Activated CD4-positive, alpha-beta T cell treated with anti-CD3 and anti-CD28 coated beads for 36 hours (primary cell): ENCODE measurements at regions of chr2 and their contacts with region 1.

Region 1: GRCh38 chr2:70046534-70046933 is 40.7 kb upstream of the PCBP1 start:
- DNase-seq: no peak
- ATAC-seq: no peak
- H3K4me3 Mint-ChIP-seq: no peak overlapping the region
- H3K27ac Mint-ChIP-seq: no peak overlapping the region
- H3K4me1 Mint-ChIP-seq: peaks cover 20% of the 10 kb centered on the region
- H3K27me3 Mint-ChIP-seq: no peaks in the 10 kb centered on the region

Region 2: DNA sequence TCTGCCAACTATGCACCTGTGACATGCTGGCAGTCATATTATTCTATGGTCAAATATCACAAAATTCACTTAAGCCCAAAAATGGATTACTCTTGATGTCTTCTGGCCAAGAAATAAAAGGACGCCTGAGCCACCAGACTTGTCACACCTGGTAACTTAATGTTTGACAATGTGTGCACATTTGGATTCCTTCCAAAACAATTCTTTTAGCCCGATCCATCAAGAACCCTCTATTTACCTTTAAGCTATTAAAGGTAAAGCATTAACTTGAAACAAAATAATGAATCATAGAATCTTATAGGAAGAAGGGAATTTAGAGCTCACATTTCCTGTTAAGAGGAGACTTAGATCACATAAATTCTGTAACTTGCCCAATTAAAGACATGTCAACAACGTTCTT is 562.8 kb before region 1 on chr2:
- CTCF ChIA-PET with region 1: no interaction called
- POLR2A ChIA-PET with region 1: no interaction called
- intact Hi-C with region 1: no loop called
- DNase-seq: no peak
- ATAC-seq: no peak
- H3K4me3 Mint-ChIP-seq: no peak overlapping the region
- H3K27ac Mint-ChIP-seq: no peak overlapping the region
- H3K4me1 Mint-ChIP-seq: peaks cover 36% of the 10 kb centered on the region
- H3K27me3 Mint-ChIP-seq: no peaks in the 10 kb centered on the region

Region 3: DNA sequence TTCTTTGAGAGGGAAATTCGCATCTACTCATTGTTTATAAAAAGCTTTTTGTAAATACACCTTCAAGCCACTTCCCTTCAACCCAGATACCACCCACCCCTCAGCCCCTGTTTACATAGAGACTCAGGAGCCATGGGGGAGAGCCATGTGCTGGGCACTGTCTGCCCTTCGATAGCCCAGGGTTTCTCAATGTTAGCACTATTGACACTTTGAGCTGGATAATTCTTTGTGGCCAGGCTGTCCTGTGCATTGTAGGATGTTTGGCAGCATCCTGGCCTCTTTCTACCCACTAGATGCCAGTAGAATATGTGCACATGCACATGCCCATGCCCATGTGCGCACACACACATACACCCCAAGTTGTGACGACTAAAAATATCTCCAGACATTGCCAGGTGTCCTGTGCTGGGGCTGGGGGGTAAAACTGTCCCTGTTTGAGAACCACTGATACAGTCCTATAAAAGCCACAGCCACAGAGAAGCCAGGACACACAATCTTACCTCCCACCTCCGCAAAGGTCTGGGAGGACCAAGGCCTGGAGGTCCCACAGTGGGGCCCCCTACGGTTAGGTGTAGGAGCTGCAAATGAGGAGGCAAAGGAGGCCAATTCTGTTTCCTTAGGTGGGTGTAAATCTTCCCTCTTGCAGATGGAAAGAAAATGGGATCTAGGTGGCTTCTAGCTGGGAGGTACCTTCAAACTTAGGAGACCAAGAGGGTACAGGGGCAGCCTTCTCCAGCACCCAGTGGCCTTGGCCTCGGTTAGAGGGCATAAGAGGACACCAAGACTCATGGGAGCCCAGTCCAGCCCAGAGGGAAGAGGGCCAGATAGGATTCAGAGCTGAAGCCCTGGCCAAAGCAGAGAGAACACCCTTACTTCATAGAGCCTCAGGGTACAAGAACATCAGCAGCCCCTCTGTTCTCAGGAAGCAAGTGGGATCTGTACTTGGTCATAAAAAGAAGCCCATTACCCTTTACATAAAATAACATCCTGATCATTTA is 40.4 kb before region 1 on chr2:
- CTCF ChIA-PET with region 1: no interaction called
- POLR2A ChIA-PET with region 1: interaction called, 3 read pairs
- intact Hi-C with region 1: loop called in 1 of 2 experiments (anchors 2 kb)
- DNase-seq: no peak
- ATAC-seq: no peak
- H3K4me3 Mint-ChIP-seq: no peak overlapping the region
- H3K27ac Mint-ChIP-seq: no peak overlapping the region
- H3K4me1 Mint-ChIP-seq: peaks cover 7% of the 10 kb centered on the region
- H3K27me3 Mint-ChIP-seq: no peaks in the 10 kb centered on the region